A673 (cell line): ENCODE measurements at regions of chr11 and their contacts with region 1.

Region 1: DNA sequence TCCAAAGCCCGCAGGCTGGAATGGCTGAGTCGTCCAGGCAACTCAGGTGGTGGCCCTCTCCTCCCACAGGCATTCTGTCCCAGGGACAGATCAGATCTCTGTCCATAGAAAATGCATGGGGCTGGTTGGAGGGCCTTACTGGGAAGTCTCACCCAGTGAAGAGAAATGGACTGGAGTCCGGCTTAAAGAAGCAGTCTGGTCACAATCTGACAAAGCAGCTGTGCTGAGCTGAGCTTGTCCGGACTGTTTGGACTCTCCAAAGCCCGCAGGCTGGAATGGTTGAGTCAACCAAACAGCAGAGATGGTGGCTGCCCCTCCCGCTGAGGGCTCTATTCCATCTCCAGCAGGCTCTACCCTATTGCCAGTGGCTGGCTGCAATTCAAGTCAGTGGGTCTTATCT is 14.4 kb upstream of the DEPDC7 start:
- DNase-seq: no peak
- H3K4me3 ChIP-seq: no peak overlapping the region
- H3K27ac ChIP-seq: no peak overlapping the region
- H3K4me1 ChIP-seq: no peaks in the 10 kb centered on the region
- H3K27me3 ChIP-seq: no peaks in the 10 kb centered on the region
- CTCF ChIP-seq: no peak

Region 2: DNA sequence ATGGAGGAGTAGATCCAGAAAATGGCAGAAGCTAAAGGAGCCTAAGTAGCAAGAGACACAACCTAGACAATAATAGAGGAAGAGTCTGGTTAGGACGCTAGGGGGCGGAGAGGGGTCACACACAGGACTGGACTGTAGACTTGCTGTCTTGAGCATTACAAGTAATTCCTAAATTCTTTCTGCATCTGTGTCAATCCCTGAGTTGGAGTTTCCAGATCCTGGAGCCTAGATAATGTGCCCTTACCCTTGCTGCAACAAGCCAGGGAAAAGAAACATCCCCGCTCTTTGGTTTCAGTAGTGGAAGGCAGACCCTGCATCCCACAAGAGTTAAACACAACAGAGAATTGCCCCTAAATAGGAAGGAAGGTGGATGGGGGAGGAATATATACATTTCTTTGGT is 192.0 kb before region 1 on chr11:
- CTCF ChIA-PET with region 1: no interaction called
- POLR2A ChIA-PET with region 1: interaction called, 13 read pairs
- intact Hi-C with region 1: no loop called
- DNase-seq: peak; percentile 94
- H3K4me3 ChIP-seq: no peak overlapping the region
- H3K27ac ChIP-seq: no peak overlapping the region
- H3K4me1 ChIP-seq: no peaks in the 10 kb centered on the region
- H3K27me3 ChIP-seq: no peaks in the 10 kb centered on the region
- CTCF ChIP-seq: peak; percentile 99

Region 3: GRCh38 chr11:32838505-32838904 is 162.8 kb before region 1 on chr11:
- CTCF ChIA-PET with region 1: no interaction called
- POLR2A ChIA-PET with region 1: no interaction called
- intact Hi-C with region 1: no loop called
- DNase-seq: peak; percentile 89
- H3K4me3 ChIP-seq: no peak overlapping the region
- H3K27ac ChIP-seq: no peak overlapping the region
- H3K4me1 ChIP-seq: peaks cover 11% of the 10 kb centered on the region
- H3K27me3 ChIP-seq: no peaks in the 10 kb centered on the region
- CTCF ChIP-seq: no peak